Astrocyte of the cerebellum (primary cell): ENCODE measurements at regions of chr17 and their contacts with region 1.

Region 1: DNA sequence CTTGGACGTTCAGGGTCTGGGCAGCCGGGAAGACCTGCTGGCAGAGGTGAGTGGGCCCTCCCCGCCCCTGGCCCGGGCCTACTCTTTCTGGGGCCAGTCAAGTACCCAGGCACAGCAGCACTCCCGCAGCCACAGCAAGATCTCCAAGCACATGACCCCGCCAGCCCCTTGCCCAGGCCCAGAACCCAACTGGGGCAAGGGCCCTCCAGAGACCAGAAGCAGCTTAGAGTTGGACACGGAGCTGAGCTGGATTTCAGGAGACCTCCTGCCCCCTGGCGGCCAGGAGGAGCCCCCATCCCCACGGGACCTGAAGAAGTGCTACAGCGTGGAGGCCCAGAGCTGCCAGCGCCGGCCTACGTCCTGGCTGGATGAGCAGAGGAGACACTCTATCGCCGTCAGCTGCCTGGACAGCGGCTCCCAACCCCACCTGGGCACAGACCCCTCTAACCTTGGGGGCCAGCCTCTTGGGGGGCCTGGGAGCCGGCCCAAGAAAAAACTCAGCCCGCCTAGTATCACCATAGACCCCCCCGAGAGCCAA is 8.6 kb upstream of the ABCC3 start:
- DNase-seq: peak; percentile 62
- H3K4me3 ChIP-seq: no peak overlapping the region
- CTCF ChIP-seq: peak; percentile 82

Region 2: DNA sequence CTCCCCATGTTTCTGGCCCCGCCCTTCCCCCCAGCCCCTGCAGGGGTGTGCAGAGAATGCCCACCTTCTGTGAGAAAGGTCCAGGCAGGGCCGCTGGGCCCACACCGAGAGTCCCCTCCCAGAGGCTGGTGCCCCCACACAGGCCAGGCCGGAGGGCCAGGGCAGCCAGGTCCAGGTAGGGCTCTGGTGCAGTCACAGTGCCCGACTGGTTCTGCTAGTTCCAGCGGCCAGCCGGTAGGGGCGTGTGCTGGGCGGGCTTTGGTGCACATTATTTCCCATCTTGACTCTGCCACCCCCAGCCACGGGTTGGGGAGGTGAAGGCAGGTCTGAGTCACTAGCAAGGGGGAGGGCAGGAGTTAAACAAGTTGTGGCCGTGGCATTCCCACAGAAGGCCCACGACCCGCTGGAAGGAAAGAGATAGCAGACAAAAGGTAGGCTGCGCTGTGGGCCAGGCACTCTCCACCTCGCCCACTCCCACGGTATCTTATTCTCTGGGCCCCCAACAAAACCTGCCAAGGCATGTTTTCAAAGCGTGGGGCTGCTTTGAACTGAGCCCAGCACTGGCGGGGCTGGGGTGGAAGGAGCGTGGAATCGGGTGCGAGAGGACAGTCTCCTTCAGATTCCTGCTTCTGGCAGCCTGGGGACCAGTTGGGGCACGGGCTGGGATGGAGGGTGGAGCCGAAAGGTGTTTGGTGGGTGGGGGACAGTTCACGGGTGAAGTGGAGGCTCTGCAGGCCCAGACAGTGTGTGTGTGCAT is 91.7 kb before region 1 on chr17:
- in situ Hi-C with region 1: no loop called
- DNase-seq: no peak
- H3K4me3 ChIP-seq: no peak overlapping the region
- CTCF ChIP-seq: peak; percentile 39

Region 3: GRCh38 chr17:50560185-50560824 is 65.8 kb before region 1 on chr17 and contains the start of gene CACNA1G:
- in situ Hi-C with region 1: loop called (anchors 5 kb)
- DNase-seq: no peak
- H3K4me3 ChIP-seq: peak within 1 kb of the TSS; percentile 36
- CTCF ChIP-seq: no peak

Region 4: GRCh38 chr17:50575581-50576210 is 50.4 kb before region 1 on chr17:
- in situ Hi-C with region 1: no loop called
- DNase-seq: no peak
- H3K4me3 ChIP-seq: no peak overlapping the region
- CTCF ChIP-seq: no peak

Region 5: GRCh38 chr17:50676065-50676975 is 50.2 kb after region 1 on chr17:
- in situ Hi-C with region 1: no loop called
- DNase-seq: no peak
- H3K4me3 ChIP-seq: no peak overlapping the region
- CTCF ChIP-seq: no peak

Region 6: GRCh38 chr17:50689956-50690886 is 64.1 kb after region 1 on chr17:
- in situ Hi-C with region 1: loop called (anchors 5 kb)
- DNase-seq: no peak
- H3K4me3 ChIP-seq: no peak overlapping the region
- CTCF ChIP-seq: no peak